Mucosa of descending colon (tissue), 3 donors: ENCODE measurements at regions of chr17 and their contacts with region 1.

Region 1: GRCh38 chr17:32783602-32784001 is 93.3 kb downstream of the MYO1D start:
- DNase-seq: no peak
- ATAC-seq: peak; percentile 97
- H3K4me3 ChIP-seq: no peak overlapping the region
- H3K4me1 ChIP-seq: peaks cover 5% of the 10 kb centered on the region
- CTCF ChIP-seq: peak; percentile 22

Region 2: DNA sequence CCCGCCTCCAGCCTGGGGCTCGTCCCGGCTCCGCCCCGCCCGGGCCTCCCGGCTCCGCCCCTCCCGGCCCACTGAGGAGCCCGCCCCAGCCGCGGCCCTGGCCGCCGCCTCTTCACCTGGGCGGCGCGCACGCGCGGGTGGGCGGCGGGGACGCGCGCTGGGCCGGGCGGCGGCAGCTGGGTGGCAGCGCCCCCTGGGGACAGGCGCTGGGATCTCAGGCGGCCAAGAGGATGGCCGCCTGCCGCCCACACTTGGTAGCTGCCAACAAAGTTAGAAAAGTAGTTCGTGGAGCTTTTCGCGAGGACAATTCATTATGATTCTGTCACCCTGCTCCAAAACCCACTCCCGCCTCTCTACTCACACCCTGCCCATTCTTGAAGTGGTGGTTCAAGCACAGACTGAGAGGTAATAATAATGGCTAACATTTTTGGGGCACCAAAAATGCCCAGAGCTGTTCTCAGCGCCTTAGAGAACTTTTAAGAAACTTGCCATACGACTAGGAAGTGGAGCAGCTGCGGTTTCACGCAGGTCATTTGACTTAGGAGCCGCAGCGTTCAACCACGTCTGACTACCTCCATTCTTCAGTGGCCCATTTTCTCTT is 93.7 kb after region 1 on chr17:
- intact Hi-C with region 1: loop called (anchors 5 kb)
- DNase-seq: peak; percentile 94 to 98 (median 95)
- ATAC-seq: peak; percentile 94
- H3K4me3 ChIP-seq: peak overlapping the region; percentile 73
- H3K4me1 ChIP-seq: peaks cover 18% of the 10 kb centered on the region
- CTCF ChIP-seq: peak; percentile 93